K562 (cell line): ENCODE measurements at regions of chr22 and their contacts with region 1.

Region 1: GRCh38 chr22:19432133-19432851 is at the start of gene MRPL40:
- DNase-seq: peak; percentile 100
- ATAC-seq: peak; percentile 92
- H3K4me3 ChIP-seq: peak within 1 kb of the TSS; percentile 68
- H3K27ac ChIP-seq: peak within 1 kb of the TSS; percentile 87
- H3K4me1 ChIP-seq: peaks cover 17 to 39% of the 10 kb centered on the region in 2 experiments
- H3K27me3 ChIP-seq: no peaks in the 10 kb centered on the region
- CTCF ChIP-seq: peak in 2 of 3 experiments; percentile 16 to 23; a peak in 1 of 6 replicates
- EP300 ChIP-seq: peak; percentile 90
- POLR2A ChIP-seq: no peak
- RAD21 ChIP-seq: peak; percentile 31 to 59; a peak in 3 of 4 replicates
- polyA plus RNA-seq, gene MRPL40: 601 to 652 TPM

Region 2: GRCh38 chr22:19178656-19179496 is 253.4 kb before region 1 on chr22 and contains the start of gene SLC25A1:
- CTCF ChIA-PET with region 1: no interaction called
- POLR2A ChIA-PET with region 1: interaction called, 8 read pairs
- in situ Hi-C with region 1: no loop called
- intact Hi-C with region 1: loop called (anchors 2 kb)
- DNase-seq: peak; percentile 100
- ATAC-seq: peak; percentile 86
- H3K4me3 ChIP-seq: peak within 1 kb of the TSS; percentile 76
- H3K27ac ChIP-seq: peak within 1 kb of the TSS; percentile 85
- H3K4me1 ChIP-seq: peaks cover 31 to 89% of the 10 kb centered on the region in 2 experiments
- H3K27me3 ChIP-seq: peaks cover 10 to 22% of the 10 kb centered on the region in 2 experiments; a peak in 4 of 5 replicates
- CTCF ChIP-seq: no peak
- EP300 ChIP-seq: no peak
- POLR2A ChIP-seq: no peak
- RAD21 ChIP-seq: no peak
- polyA plus RNA-seq, gene SLC25A1: 11.0 to 23.7 TPM

Region 3: DNA sequence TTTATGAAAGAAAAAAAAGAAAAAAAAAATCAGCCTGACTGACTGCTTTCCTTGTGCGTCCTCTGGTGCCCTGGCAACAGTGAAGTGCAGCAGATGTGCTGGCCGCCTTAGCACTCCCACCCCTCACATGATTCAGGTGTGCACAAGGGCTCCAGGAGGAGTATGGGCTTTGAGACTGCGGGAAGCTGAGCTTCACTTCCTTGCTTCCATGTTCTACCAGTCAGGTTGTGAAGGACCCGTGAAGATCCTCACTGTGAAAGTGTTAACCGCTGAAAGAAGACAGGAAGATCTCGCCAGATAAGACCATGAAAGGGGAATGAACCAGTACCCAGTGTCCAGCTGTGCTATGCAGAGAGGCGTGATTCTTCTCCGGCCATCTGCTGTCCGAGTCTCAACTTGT is 49.0 kb before region 1 on chr22:
- CTCF ChIA-PET with region 1: no interaction called
- POLR2A ChIA-PET with region 1: no interaction called
- in situ Hi-C with region 1: no loop called
- intact Hi-C with region 1: no loop called
- DNase-seq: no peak
- ATAC-seq: no peak
- H3K4me3 ChIP-seq: no peak overlapping the region
- H3K27ac ChIP-seq: no peak overlapping the region
- H3K4me1 ChIP-seq: no peaks in the 10 kb centered on the region
- H3K27me3 ChIP-seq: no peaks in the 10 kb centered on the region
- CTCF ChIP-seq: no peak
- EP300 ChIP-seq: no peak
- POLR2A ChIP-seq: no peak
- RAD21 ChIP-seq: no peak

Region 4: GRCh38 chr22:19398206-19398605 is 34.1 kb before region 1 on chr22:
- CTCF ChIA-PET with region 1: no interaction called
- POLR2A ChIA-PET with region 1: interaction called, 212 read pairs
- in situ Hi-C with region 1: no loop called
- intact Hi-C with region 1: loop called (anchors 1 kb)
- DNase-seq: no peak
- ATAC-seq: no peak
- H3K4me3 ChIP-seq: no peak overlapping the region
- H3K27ac ChIP-seq: peak overlapping the region; percentile 73
- H3K4me1 ChIP-seq: peaks cover 31 to 33% of the 10 kb centered on the region in 2 experiments
- H3K27me3 ChIP-seq: no peaks in the 10 kb centered on the region
- CTCF ChIP-seq: no peak
- EP300 ChIP-seq: no peak
- POLR2A ChIP-seq: no peak
- RAD21 ChIP-seq: no peak; a peak in 1 of 4 replicates

Region 5: GRCh38 chr22:19419464-19420178 is 12.7 kb before region 1 on chr22:
- CTCF ChIA-PET with region 1: no interaction called
- POLR2A ChIA-PET with region 1: interaction called, 212 read pairs
- in situ Hi-C with region 1: no loop called
- intact Hi-C with region 1: loop called (anchors 1 kb)
- DNase-seq: peak; percentile 87 to 96 (median 90)
- ATAC-seq: peak; percentile 68
- H3K4me3 ChIP-seq: no peak overlapping the region
- H3K27ac ChIP-seq: peak overlapping the region; percentile 64
- H3K4me1 ChIP-seq: peaks cover 44 to 50% of the 10 kb centered on the region in 2 experiments
- H3K27me3 ChIP-seq: no peaks in the 10 kb centered on the region
- CTCF ChIP-seq: peak in 1 of 3 experiments; percentile 19; a peak in 2 of 6 replicates
- EP300 ChIP-seq: peak; percentile 98
- POLR2A ChIP-seq: no peak
- RAD21 ChIP-seq: no peak

Region 6: GRCh38 chr22:19455585-19456370 is 23.5 kb after region 1 on chr22:
- CTCF ChIA-PET with region 1: no interaction called
- POLR2A ChIA-PET with region 1: interaction called, 284 read pairs
- in situ Hi-C with region 1: no loop called
- intact Hi-C with region 1: no loop called
- DNase-seq: no peak
- ATAC-seq: no peak
- H3K4me3 ChIP-seq: no peak overlapping the region
- H3K27ac ChIP-seq: no peak overlapping the region
- H3K4me1 ChIP-seq: no peaks in the 10 kb centered on the region
- H3K27me3 ChIP-seq: no peaks in the 10 kb centered on the region
- CTCF ChIP-seq: no peak
- EP300 ChIP-seq: no peak
- POLR2A ChIP-seq: no peak
- RAD21 ChIP-seq: no peak

Region 7: DNA sequence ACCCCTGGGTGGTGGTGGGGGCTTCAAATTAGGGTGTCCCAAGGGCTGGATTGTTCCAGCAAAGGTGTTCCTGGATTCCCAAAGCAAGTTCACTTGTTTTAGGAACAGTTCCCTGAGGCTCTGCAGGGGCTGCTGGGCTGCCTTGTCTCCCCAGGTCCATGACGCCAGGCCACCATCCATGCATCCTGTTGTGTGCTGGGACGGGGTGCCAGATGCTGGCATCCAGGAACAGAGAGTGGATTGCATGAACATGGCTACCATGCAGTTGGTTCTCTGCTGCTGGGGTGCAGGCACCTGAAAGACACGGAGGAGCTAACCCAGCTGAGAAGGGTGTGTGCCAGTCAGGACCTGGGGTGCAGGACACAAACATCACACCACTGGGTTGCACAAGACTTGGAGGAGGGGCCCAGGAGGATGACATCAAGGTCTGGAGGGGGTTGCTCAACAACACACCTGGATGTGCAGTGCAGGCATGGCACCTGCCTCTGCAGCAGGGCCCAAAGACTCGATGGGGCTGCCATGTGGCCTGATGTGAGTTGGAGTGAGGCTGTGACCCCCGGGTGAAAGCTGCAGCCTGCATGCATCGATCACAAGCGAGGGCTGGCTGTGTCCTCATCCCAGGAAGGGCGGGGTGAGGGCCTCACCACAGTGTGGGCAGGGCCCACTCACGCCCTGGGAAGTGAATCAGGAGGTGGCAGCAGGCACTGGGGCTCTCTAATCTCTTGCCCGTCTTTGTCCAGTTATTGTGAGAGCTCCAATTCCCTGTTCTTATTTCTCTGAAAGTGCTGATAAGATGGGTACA is 166.0 kb after region 1 on chr22:
- CTCF ChIA-PET with region 1: no interaction called
- POLR2A ChIA-PET with region 1: no interaction called
- in situ Hi-C with region 1: no loop called
- intact Hi-C with region 1: no loop called
- DNase-seq: peak in 2 of 4 experiments; percentile 28 to 37
- ATAC-seq: 0 out of 3 replicates have a peak, but pooled peaks have one; percentile 7
- H3K4me3 ChIP-seq: no peak overlapping the region
- H3K27ac ChIP-seq: no peak overlapping the region
- H3K4me1 ChIP-seq: peaks cover 0 to 11% of the 10 kb centered on the region in 2 experiments; a peak in 1 of 5 replicates
- H3K27me3 ChIP-seq: peaks cover 79 to 85% of the 10 kb centered on the region in 2 experiments
- CTCF ChIP-seq: no peak
- EP300 ChIP-seq: no peak
- POLR2A ChIP-seq: no peak
- RAD21 ChIP-seq: no peak